ENCODE measurements at regions of chr18 and their contacts with region 1.

Region 1: DNA sequence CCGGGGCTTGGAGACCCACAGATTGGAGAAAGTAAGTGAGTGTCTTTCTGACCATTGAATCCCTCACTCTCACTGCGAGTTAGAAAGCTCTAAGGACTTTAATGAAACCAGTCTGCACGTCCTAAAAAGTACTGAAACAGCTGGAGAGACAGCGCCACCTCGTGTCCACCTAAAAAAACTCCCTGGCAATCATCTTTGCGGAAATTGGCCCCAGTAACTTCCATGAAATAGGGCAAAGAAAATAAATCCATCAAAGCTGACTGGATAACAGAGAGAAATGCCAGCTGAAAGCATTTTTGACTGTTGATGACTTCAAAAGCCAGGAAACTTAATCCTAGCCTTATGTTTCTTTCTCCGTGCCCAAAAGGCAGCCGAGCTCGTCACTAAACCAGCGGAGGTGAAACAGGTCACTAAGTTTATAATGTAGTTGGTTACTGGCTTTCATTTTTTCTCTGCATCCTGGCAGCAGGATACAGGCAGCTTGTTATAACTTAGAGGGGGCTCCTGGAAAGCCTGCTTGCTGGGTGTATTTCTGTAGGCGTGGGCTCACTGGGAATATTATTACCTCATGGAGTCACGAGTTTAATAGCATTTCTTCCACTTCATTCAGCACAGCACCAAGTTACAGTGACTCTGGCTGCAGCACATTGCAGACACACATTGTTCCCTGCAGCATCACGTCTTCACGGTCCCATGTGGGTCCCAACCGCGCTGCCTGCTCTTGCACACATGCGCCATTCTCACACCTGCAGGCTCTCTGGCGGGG is 266.5 kb downstream of the HRH4 start:
- DNase-seq: no peak
- ATAC-seq: no peak
- H3K4me3 Mint-ChIP-seq: no peak overlapping the region
- H3K27ac Mint-ChIP-seq: no peak overlapping the region
- H3K4me1 Mint-ChIP-seq: peaks cover 2% of the 10 kb centered on the region
- H3K27me3 Mint-ChIP-seq: no peaks in the 10 kb centered on the region
- CTCF ChIP-seq: no peak

Region 2: DNA sequence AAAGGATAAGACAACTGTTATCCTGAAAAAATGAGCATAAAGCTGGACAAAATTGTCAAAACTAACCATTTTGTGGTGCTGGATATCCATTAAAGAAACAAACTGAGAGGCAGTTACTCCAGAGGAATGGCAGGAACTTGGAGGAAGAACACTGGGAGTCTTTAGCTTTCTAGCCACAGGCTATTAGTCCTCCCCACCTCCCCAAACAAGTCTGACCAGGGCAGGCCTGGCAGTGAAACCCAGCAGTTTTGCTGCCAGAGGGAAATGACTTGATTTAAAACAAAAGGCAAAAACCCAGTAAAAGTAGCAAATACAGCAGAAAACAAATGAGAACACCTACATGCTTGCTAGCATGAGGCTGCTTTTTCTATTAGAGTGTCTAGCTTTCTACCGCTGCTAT is 364.2 kb before region 1 on chr18:
- CTCF ChIA-PET with region 1: interaction called, 12 read pairs
- POLR2A ChIA-PET with region 1: no interaction called
- intact Hi-C with region 1: loop called (anchors 1 kb)
- DNase-seq: no peak
- ATAC-seq: no peak
- H3K4me3 Mint-ChIP-seq: no peak overlapping the region
- H3K27ac Mint-ChIP-seq: no peak overlapping the region
- H3K4me1 Mint-ChIP-seq: no peaks in the 10 kb centered on the region
- H3K27me3 Mint-ChIP-seq: peaks cover 2% of the 10 kb centered on the region
- CTCF ChIP-seq: no peak

Region 3: GRCh38 chr18:24616653-24617052 is 110.3 kb before region 1 on chr18:
- CTCF ChIA-PET with region 1: no interaction called
- POLR2A ChIA-PET with region 1: no interaction called
- intact Hi-C with region 1: no loop called
- DNase-seq: no peak
- ATAC-seq: no peak
- H3K4me3 Mint-ChIP-seq: no peak overlapping the region
- H3K27ac Mint-ChIP-seq: no peak overlapping the region
- H3K4me1 Mint-ChIP-seq: no peaks in the 10 kb centered on the region
- H3K27me3 Mint-ChIP-seq: no peaks in the 10 kb centered on the region
- CTCF ChIP-seq: no peak

Region 4: DNA sequence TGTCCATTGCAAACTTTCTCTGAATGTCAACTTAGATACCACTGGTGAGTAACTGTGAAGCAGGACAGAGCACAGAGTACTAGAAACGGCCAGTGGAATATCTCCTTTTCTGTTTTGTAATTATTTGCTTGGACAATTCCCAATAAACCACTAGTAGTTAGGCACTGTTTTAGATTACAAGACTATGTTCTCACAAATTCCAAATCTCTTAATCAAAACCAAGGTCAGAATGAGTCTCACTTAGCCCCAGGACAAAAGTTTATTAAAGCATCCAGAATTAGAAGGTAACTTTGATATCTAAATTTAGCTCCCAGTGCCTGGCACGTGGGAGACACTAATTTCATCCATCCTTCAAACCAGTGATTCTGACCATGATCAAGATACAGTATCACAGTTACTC is 536.0 kb after region 1 on chr18:
- CTCF ChIA-PET with region 1: no interaction called
- POLR2A ChIA-PET with region 1: no interaction called
- intact Hi-C with region 1: no loop called
- DNase-seq: no peak
- ATAC-seq: no peak
- H3K4me3 Mint-ChIP-seq: no peak overlapping the region
- H3K27ac Mint-ChIP-seq: no peak overlapping the region
- H3K4me1 Mint-ChIP-seq: no peaks in the 10 kb centered on the region
- H3K27me3 Mint-ChIP-seq: no peaks in the 10 kb centered on the region
- CTCF ChIP-seq: no peak